Naive thymus-derived CD4-positive, alpha-beta T cell (primary cell): ENCODE measurements at regions of chr2 and their contacts with region 1.

Region 1: DNA sequence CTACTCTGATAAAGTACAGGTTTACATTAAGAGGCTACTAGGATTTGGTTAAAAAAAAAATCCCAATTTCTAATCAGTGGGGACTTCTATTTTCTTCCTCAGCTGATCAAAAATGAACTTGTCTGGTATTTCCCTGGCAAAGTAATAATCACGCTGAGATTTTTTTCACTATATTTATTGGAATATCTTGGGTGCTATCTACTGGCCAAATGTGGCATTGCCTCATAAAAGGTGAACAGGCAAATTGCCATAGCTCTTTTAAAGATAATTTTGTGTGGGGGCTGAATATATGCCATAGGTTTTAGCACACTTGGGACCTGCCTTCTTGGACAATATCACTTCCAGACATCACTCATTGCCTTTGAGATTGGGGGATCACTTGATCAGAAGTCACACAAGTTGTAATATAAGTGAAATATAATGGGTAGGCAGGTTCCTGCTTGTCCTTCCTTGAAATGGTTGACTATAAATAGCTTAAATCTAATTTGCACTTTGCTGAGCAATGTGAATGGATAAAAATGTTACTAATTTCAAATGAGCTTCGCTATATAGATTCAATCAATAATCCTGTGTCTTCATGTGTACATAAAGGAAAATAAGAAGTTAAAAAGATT is 7.0 kb upstream of the NXPH2 start:
- DNase-seq: peak in 5 of 9 donors; percentile 3 to 14 (median 5)
- ATAC-seq: no peak
- H3K4me3 ChIP-seq: no peak overlapping the region
- H3K4me3 Mint-ChIP-seq: no peak overlapping the region
- H3K27ac ChIP-seq: no peak overlapping the region
- H3K27ac Mint-ChIP-seq: no peak overlapping the region
- H3K4me1 ChIP-seq: no peaks in the 10 kb centered on the region
- H3K4me1 Mint-ChIP-seq: no peaks in the 10 kb centered on the region
- H3K27me3 ChIP-seq: no peaks in the 10 kb centered on the region
- H3K27me3 Mint-ChIP-seq: peaks cover 9 to 17% (median 16%) of the 10 kb centered on the region in 5 donors

Region 2: DNA sequence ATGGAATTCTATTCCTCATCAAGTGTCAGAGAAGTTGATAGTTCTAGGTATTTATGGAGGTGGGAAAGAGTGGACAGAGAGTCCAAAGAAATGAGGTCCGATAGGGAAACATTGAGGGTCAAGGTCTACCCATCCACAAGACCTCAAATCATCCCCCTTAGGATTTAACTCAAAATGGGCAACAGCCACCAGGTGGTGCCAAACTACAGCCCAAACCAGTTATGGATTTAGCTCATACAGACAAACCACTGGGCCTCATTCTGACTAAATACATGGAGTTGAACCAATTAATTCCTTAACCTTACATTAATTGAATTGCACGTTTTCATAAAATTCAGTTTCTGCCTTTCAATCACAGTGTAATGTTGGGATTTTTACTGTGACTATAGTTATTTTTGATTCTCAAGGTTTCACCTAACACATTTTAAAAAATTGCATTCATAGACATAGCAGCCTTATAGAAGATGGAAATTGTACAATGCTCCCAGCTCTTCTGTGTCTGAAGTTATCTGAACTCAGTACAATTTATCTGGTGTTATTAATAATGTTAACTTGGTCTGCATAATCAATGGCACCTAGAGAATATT is 921.1 kb before region 1 on chr2:
- CTCF ChIA-PET with region 1: interaction called, 8 read pairs
- POLR2A ChIA-PET with region 1: no interaction called
- intact Hi-C with region 1: loop called in 1 of 2 experiments (anchors 2 kb)
- DNase-seq: peak in 8 of 9 donors; percentile 2 to 40 (median 22)
- ATAC-seq: no peak
- H3K4me3 ChIP-seq: no peak overlapping the region
- H3K4me3 Mint-ChIP-seq: no peak overlapping the region
- H3K27ac ChIP-seq: no peak overlapping the region
- H3K27ac Mint-ChIP-seq: no peak overlapping the region
- H3K4me1 ChIP-seq: no peaks in the 10 kb centered on the region
- H3K4me1 Mint-ChIP-seq: no peaks in the 10 kb centered on the region
- H3K27me3 ChIP-seq: no peaks in the 10 kb centered on the region
- H3K27me3 Mint-ChIP-seq: peaks cover 0 to 9% (median 6%) of the 10 kb centered on the region in 5 donors

Region 3: DNA sequence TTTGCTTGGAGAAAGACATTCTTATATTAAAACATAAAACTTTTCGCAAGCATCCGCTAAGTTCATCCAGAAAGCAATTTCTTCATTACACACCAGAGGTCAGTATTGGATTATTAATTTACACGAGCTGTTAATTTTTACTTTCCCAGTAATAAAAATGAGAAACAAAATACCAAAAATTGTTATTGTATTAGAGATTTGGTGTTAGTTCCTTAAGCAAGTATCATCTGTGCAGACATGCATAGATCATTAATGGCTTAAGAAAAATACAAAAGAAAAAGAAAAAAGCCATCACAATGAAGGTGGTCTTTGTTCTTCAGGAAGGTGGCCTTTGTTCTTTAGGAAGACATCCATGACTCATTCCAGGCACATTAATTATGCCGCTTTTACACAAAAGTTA is 876.5 kb before region 1 on chr2:
- CTCF ChIA-PET with region 1: interaction called, 3 read pairs
- POLR2A ChIA-PET with region 1: no interaction called
- intact Hi-C with region 1: loop called in 1 of 2 experiments (anchors 2 kb)
- DNase-seq: no peak
- ATAC-seq: no peak
- H3K4me3 ChIP-seq: no peak overlapping the region
- H3K4me3 Mint-ChIP-seq: no peak overlapping the region
- H3K27ac ChIP-seq: no peak overlapping the region
- H3K27ac Mint-ChIP-seq: no peak overlapping the region
- H3K4me1 ChIP-seq: no peaks in the 10 kb centered on the region
- H3K4me1 Mint-ChIP-seq: no peaks in the 10 kb centered on the region
- H3K27me3 ChIP-seq: no peaks in the 10 kb centered on the region
- H3K27me3 Mint-ChIP-seq: peaks cover 0 to 27% (median 3%) of the 10 kb centered on the region in 5 donors

Region 4: DNA sequence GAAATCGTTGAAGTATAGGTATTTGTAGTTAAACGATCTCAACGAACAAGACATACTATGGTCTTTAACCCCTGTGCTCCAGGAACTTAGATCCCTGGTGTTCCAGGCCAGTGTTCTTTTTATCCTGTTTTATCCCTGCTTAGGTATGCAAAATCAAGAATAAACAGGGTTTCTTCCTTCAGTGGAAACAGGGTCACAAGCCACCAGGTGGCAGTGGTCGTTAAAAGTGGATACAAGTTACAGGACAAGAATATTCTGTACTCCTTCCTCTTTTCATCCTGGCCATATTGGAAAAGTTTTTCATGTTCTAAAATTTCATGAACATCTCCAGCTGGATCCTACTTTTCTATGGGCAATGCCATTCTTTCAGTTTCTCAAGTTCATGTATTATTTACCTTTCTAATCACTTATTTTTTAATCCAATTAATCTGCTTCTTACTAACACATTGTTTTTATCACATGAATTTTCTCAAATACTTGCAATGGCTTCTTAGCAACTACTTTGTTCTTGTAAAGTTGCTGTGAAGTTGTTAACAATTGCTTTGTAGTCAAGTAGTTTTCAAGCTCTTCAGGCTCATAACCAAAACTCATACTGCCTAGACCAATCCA is 839.3 kb before region 1 on chr2:
- CTCF ChIA-PET with region 1: no interaction called
- POLR2A ChIA-PET with region 1: no interaction called
- intact Hi-C with region 1: loop called in 1 of 2 experiments (anchors 1 kb)
- DNase-seq: peak in 2 of 9 donors; percentile 2 to 6
- ATAC-seq: no peak
- H3K4me3 ChIP-seq: no peak overlapping the region
- H3K4me3 Mint-ChIP-seq: no peak overlapping the region
- H3K27ac ChIP-seq: no peak overlapping the region
- H3K27ac Mint-ChIP-seq: no peak overlapping the region
- H3K4me1 ChIP-seq: no peaks in the 10 kb centered on the region
- H3K4me1 Mint-ChIP-seq: peaks cover 0 to 7% (median 5%) of the 10 kb centered on the region in 7 donors
- H3K27me3 ChIP-seq: no peaks in the 10 kb centered on the region
- H3K27me3 Mint-ChIP-seq: peaks cover 0 to 9% (median 3%) of the 10 kb centered on the region in 5 donors

Region 5: DNA sequence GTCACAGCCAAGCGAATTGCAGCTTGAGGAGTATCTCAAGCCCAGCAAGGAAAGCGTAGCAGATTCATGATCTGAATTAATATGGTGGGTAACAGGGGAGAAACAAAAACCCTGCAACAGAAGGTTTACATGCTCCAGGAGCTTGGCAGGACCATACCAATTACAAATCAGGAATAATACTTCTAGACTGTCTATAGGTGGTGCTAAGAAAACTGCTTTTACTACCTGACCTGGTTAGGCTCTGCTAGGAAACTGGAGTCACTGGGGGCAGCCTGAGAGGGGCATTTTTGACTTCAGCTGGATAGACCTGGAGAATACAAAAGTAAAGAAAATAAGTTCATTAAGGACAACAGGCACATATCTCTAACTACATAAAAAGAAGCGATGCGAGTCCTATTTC is 310.2 kb before region 1 on chr2:
- CTCF ChIA-PET with region 1: no interaction called
- POLR2A ChIA-PET with region 1: no interaction called
- intact Hi-C with region 1: loop called in 1 of 2 experiments (anchors 2 kb)
- DNase-seq: no peak
- ATAC-seq: no peak
- H3K4me3 ChIP-seq: no peak overlapping the region
- H3K4me3 Mint-ChIP-seq: no peak overlapping the region
- H3K27ac ChIP-seq: no peak overlapping the region
- H3K27ac Mint-ChIP-seq: no peak overlapping the region
- H3K4me1 ChIP-seq: no peaks in the 10 kb centered on the region
- H3K4me1 Mint-ChIP-seq: peaks cover 0 to 2% (median 0%) of the 10 kb centered on the region in 7 donors
- H3K27me3 ChIP-seq: no peaks in the 10 kb centered on the region
- H3K27me3 Mint-ChIP-seq: peaks cover 0 to 6% (median 0%) of the 10 kb centered on the region in 5 donors

Region 6: GRCh38 chr2:138610216-138610953 is 176.8 kb before region 1 on chr2:
- CTCF ChIA-PET with region 1: no interaction called
- POLR2A ChIA-PET with region 1: no interaction called
- intact Hi-C with region 1: no loop called
- DNase-seq: no peak
- ATAC-seq: no peak
- H3K4me3 ChIP-seq: no peak overlapping the region
- H3K4me3 Mint-ChIP-seq: no peak overlapping the region
- H3K27ac ChIP-seq: no peak overlapping the region
- H3K27ac Mint-ChIP-seq: no peak overlapping the region
- H3K4me1 ChIP-seq: no peaks in the 10 kb centered on the region
- H3K4me1 Mint-ChIP-seq: no peaks in the 10 kb centered on the region
- H3K27me3 ChIP-seq: no peaks in the 10 kb centered on the region
- H3K27me3 Mint-ChIP-seq: peaks cover 0 to 9% (median 0%) of the 10 kb centered on the region in 5 donors

Region 7: GRCh38 chr2:138652378-138652777 is 134.8 kb before region 1 on chr2:
- CTCF ChIA-PET with region 1: no interaction called
- POLR2A ChIA-PET with region 1: no interaction called
- intact Hi-C with region 1: no loop called
- DNase-seq: no peak
- ATAC-seq: no peak
- H3K4me3 ChIP-seq: no peak overlapping the region
- H3K4me3 Mint-ChIP-seq: no peak overlapping the region
- H3K27ac ChIP-seq: no peak overlapping the region
- H3K27ac Mint-ChIP-seq: no peak overlapping the region
- H3K4me1 ChIP-seq: no peaks in the 10 kb centered on the region
- H3K4me1 Mint-ChIP-seq: peaks cover 0 to 3% (median 0%) of the 10 kb centered on the region in 7 donors
- H3K27me3 ChIP-seq: no peaks in the 10 kb centered on the region
- H3K27me3 Mint-ChIP-seq: peaks cover 0 to 18% (median 6%) of the 10 kb centered on the region in 5 donors

Region 8: DNA sequence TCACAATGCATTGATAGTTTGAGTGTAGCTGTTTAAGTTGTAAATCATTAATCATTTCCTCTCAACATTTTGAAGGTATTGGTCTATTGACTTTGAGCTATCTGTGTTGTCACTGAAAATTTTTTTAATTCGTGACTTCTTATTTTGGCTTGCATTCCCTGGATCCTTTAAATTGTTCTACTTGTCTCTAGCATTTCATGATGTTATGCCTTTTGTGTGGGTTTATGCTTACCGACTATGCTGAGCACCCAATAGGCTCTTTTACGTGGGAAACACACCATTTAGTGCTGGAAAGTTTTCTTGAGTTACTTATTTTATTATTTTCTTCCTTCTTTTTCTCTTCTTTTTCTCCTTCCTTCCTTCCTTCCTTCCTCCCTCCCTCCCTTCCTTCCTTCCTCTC is 24.3 kb after region 1 on chr2:
- CTCF ChIA-PET with region 1: no interaction called
- POLR2A ChIA-PET with region 1: no interaction called
- intact Hi-C with region 1: no loop called
- DNase-seq: no peak
- ATAC-seq: no peak
- H3K4me3 ChIP-seq: no peak overlapping the region
- H3K4me3 Mint-ChIP-seq: no peak overlapping the region
- H3K27ac ChIP-seq: no peak overlapping the region
- H3K27ac Mint-ChIP-seq: no peak overlapping the region
- H3K4me1 ChIP-seq: no peaks in the 10 kb centered on the region
- H3K4me1 Mint-ChIP-seq: peaks cover 0 to 4% (median 0%) of the 10 kb centered on the region in 7 donors
- H3K27me3 ChIP-seq: no peaks in the 10 kb centered on the region
- H3K27me3 Mint-ChIP-seq: peaks cover 2 to 28% (median 18%) of the 10 kb centered on the region in 5 donors

Region 9: GRCh38 chr2:139067874-139068273 is 280.7 kb after region 1 on chr2:
- CTCF ChIA-PET with region 1: no interaction called
- POLR2A ChIA-PET with region 1: no interaction called
- intact Hi-C with region 1: no loop called
- DNase-seq: no peak
- ATAC-seq: no peak
- H3K4me3 ChIP-seq: no peak overlapping the region
- H3K4me3 Mint-ChIP-seq: no peak overlapping the region
- H3K27ac ChIP-seq: no peak overlapping the region
- H3K27ac Mint-ChIP-seq: no peak overlapping the region
- H3K4me1 ChIP-seq: no peaks in the 10 kb centered on the region
- H3K4me1 Mint-ChIP-seq: no peaks in the 10 kb centered on the region
- H3K27me3 ChIP-seq: no peaks in the 10 kb centered on the region
- H3K27me3 Mint-ChIP-seq: no peaks in the 10 kb centered on the region